K562 (cell line): ENCODE measurements at regions of chr7 and their contacts with region 1.

Region 1: GRCh38 chr7:64307254-64308015 is 6.3 kb upstream of the ZNF736 start:
- DNase-seq: peak; percentile 39 to 88 (median 46)
- ATAC-seq: peak; percentile 97
- H3K4me3 ChIP-seq: peak overlapping the region; percentile 37
- H3K27ac ChIP-seq: peak overlapping the region; percentile 54; the same call in 2 of the 3 replicates
- H3K4me1 ChIP-seq: peaks cover 0 to 3% of the 10 kb centered on the region in 2 experiments; a peak in 3 of 5 replicates
- H3K27me3 ChIP-seq: no peaks in the 10 kb centered on the region
- CTCF ChIP-seq: no peak
- EP300 ChIP-seq: no peak
- POLR2A ChIP-seq: 0 out of 2 replicates have a peak, but pooled peaks have one; percentile 39
- RAD21 ChIP-seq: no peak

Region 2: DNA sequence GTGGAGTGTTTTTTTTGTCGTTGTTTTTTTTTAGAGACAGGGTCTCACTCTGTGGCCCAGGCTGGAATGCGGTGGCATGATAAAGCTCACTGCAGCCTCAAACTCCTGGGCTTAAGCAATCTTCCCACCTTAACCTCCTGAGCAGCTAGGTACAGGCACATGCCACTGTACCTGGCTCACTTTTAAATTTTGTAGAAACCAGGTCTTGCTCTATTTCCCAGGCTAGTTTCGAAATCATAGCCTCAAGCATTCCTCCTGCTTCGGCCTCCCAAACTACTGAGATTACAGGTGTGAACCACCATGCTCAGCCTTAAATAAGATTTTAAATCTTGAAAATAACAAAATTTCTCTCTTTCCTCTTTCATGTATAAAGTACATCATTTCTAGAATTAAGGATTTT is 461.3 kb before region 1 on chr7:
- CTCF ChIA-PET with region 1: no interaction called
- POLR2A ChIA-PET with region 1: no interaction called
- in situ Hi-C with region 1: no loop called
- intact Hi-C with region 1: loop called (anchors 10 kb)
- DNase-seq: no peak
- ATAC-seq: no peak
- H3K4me3 ChIP-seq: no peak overlapping the region
- H3K27ac ChIP-seq: no peak overlapping the region
- H3K4me1 ChIP-seq: no peaks in the 10 kb centered on the region
- H3K27me3 ChIP-seq: no peaks in the 10 kb centered on the region
- CTCF ChIP-seq: no peak
- EP300 ChIP-seq: no peak
- POLR2A ChIP-seq: no peak
- RAD21 ChIP-seq: no peak